Psoas muscle (tissue), 8 donors: ENCODE measurements at regions of chr1 and their contacts with region 1.

Region 1: GRCh38 chr1:203476216-203476814 is 709 bp downstream of the PRELP start:
- DNase-seq: no peak
- ATAC-seq: no peak
- H3K4me3 ChIP-seq: peak overlapping the region; percentile 44
- H3K27ac ChIP-seq: peak overlapping the region; percentile 16
- H3K4me1 ChIP-seq: no peaks in the 10 kb centered on the region
- H3K27me3 ChIP-seq: peaks cover 0 to 9% (median 4%) of the 10 kb centered on the region in 3 donors
- CTCF ChIP-seq: no peak

Region 2: DNA sequence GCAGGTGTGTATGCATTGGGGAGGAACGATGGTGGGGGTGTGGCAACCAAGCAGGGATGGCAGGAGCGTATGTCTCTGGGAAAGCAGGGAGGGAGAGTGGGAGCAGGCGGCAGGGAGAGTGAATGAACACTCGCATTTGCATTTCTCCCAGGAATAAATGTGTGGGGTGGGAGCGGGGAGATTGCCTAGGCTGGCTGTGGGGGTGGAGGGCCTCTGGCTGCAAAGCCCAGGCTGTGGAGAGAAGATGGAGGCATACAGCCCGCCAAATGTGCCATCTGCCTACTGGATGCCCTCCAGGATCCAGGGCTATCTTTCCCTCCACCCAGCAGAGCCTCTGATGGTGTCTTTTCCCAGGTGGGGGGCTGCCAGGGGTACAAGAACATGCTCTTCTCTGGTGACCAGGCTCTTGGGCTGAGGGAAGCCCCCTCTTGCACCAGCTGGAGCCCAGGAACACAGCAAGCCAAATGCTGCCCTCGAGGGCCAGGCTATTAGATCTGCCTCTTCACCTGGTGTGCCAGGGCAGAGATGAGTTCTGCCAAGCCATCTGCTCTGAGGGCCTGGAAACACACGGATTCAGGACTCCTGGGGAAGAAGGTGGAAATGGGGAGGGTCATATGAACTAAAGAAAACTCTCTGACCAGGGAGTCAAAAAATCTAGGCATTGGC is 15.9 kb after region 1 on chr1:
- intact Hi-C with region 1: loop called in 1 of 2 experiments (anchors 2 kb)
- DNase-seq: no peak
- ATAC-seq: no peak
- H3K4me3 ChIP-seq: no peak overlapping the region
- H3K27ac ChIP-seq: no peak overlapping the region
- H3K4me1 ChIP-seq: peaks cover 5% of the 10 kb centered on the region
- H3K27me3 ChIP-seq: no peaks in the 10 kb centered on the region
- CTCF ChIP-seq: no peak